AG04450 (cell line): ENCODE measurements at regions of chr15 and their contacts with region 1.

Region 1: GRCh38 chr15:64865998-64866520 is 24.3 kb downstream of the PLEKHO2 start:
- DNase-seq: peak; percentile 93
- H3K4me3 ChIP-seq: no peak overlapping the region
- H3K27ac ChIP-seq: peak overlapping the region; percentile 91
- H3K27me3 ChIP-seq: no peaks in the 10 kb centered on the region
- CTCF ChIP-seq: no peak

Region 2: DNA sequence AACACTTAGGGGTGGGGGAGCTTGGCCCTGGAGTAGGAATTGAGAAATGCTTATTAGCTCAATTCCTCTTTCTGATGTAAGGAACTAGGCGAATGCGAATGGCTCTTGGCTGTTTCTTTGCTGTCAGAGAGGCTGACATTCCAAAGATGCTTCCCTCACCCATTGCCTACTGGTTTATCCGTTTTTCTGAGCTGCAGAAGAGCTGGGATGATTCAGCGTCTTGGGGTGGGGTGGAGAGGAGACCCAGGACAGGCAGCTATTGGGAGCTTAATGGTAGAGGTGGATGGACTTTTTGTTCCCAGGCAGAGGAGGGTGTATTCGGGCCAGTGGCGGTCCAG is 14.6 kb before region 1 on chr15:
- CTCF ChIA-PET with region 1: no interaction called
- POLR2A ChIA-PET with region 1: interaction called, 18 read pairs
- DNase-seq: peak; percentile 84
- H3K4me3 ChIP-seq: no peak overlapping the region
- H3K27ac ChIP-seq: peak overlapping the region; percentile 91
- H3K27me3 ChIP-seq: no peaks in the 10 kb centered on the region
- CTCF ChIP-seq: no peak